Breast epithelium (tissue), 4 donors: ENCODE measurements at regions of chr21 and their contacts with region 1.

Region 1: GRCh38 chr21:29441651-29442050 is 142.9 kb downstream of the BACH1 start:
- DNase-seq: no peak
- H3K4me3 ChIP-seq: no peak overlapping the region
- H3K27ac ChIP-seq: no peak overlapping the region
- H3K4me1 ChIP-seq: no peaks in the 10 kb centered on the region
- H3K27me3 ChIP-seq: no peaks in the 10 kb centered on the region
- CTCF ChIP-seq: no peak
- POLR2A ChIP-seq: no peak

Region 2: DNA sequence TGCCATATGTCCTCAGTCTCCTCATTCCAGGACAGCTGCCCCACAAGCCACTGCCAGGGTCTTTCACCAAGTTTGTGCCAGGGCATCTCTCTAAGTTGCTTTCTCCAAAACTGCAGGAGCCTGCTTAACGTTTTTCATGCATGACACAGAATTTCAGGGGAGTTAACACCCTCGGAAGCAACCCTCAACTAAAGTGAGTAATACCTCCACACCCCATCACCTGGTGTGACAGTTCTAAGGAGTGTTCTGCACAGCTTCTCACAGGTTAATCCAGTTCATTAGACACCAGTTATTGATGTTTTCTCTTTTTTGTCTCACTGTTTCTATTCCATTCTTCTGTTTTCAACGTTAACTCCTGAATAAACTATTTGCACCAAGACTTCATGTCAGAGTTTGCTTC is 28.0 kb before region 1 on chr21:
- intact Hi-C with region 1: loop called (anchors 2 kb)
- DNase-seq: no peak
- H3K4me3 ChIP-seq: no peak overlapping the region
- H3K27ac ChIP-seq: no peak overlapping the region
- H3K4me1 ChIP-seq: no peaks in the 10 kb centered on the region
- H3K27me3 ChIP-seq: no peaks in the 10 kb centered on the region
- CTCF ChIP-seq: no peak
- POLR2A ChIP-seq: no peak

Region 3: GRCh38 chr21:29462479-29462878 is 20.8 kb after region 1 on chr21:
- intact Hi-C with region 1: no loop called
- DNase-seq: no peak
- H3K4me3 ChIP-seq: no peak overlapping the region
- H3K27ac ChIP-seq: no peak overlapping the region
- H3K4me1 ChIP-seq: no peaks in the 10 kb centered on the region
- H3K27me3 ChIP-seq: no peaks in the 10 kb centered on the region
- CTCF ChIP-seq: no peak
- POLR2A ChIP-seq: no peak

Region 4: DNA sequence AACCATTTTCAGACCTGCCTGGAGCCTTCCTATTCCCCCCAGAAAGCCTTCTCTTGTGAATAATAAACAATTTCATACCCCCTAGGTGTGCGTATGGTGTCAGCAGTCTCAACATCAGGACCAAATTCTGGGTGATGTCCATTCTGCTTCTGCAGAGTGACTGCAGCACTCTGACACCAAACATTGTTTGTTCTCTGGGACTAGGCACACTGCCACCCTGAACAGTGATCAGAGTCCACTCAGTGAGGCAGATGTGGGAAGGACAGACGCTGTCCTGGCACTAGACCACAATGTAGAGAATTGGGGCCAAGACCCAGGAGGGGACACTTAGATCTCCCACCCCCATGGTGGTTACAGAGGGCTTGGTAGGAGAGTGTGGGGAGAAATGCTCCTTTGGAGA is 32.2 kb after region 1 on chr21:
- intact Hi-C with region 1: no loop called
- DNase-seq: no peak
- H3K4me3 ChIP-seq: no peak overlapping the region
- H3K27ac ChIP-seq: no peak overlapping the region
- H3K4me1 ChIP-seq: no peaks in the 10 kb centered on the region
- H3K27me3 ChIP-seq: no peaks in the 10 kb centered on the region
- CTCF ChIP-seq: no peak
- POLR2A ChIP-seq: no peak

Region 5: GRCh38 chr21:29748391-29749167 is 306.9 kb after region 1 on chr21:
- intact Hi-C with region 1: no loop called
- DNase-seq: no peak
- H3K4me3 ChIP-seq: no peak overlapping the region
- H3K27ac ChIP-seq: peak overlapping the region; percentile 13 to 20
- H3K4me1 ChIP-seq: no peaks in the 10 kb centered on the region
- H3K27me3 ChIP-seq: no peaks in the 10 kb centered on the region
- CTCF ChIP-seq: no peak
- POLR2A ChIP-seq: no peak